B cell (primary cell): ENCODE measurements at regions of chr6 and their contacts with region 1.

Region 1: GRCh38 chr6:157274471-157275226 is 48.7 kb downstream of the TMEM242 start:
- DNase-seq: peak; percentile 95
- ATAC-seq: peak; percentile 81
- H3K4me3 ChIP-seq: peak overlapping the region in 4 of 5 experiments; percentile 63 to 79 (median 66)
- H3K4me3 Mint-ChIP-seq: peak overlapping the region; percentile 96
- H3K27ac ChIP-seq: peak overlapping the region; percentile 81 to 92
- H3K27ac Mint-ChIP-seq: peak overlapping the region; percentile 98
- H3K4me1 ChIP-seq: peaks cover 9 to 17% of the 10 kb centered on the region in 2 donors
- H3K4me1 Mint-ChIP-seq: peaks cover 14% of the 10 kb centered on the region
- H3K27me3 ChIP-seq: no peaks in the 10 kb centered on the region
- H3K27me3 Mint-ChIP-seq: no peaks in the 10 kb centered on the region
- CTCF ChIP-seq: peak; percentile 89

Region 2: GRCh38 chr6:155314092-155314772 is 1960.4 kb before region 1 on chr6 and contains the start of gene TFB1M:
- CTCF ChIA-PET with region 1: no interaction called
- POLR2A ChIA-PET with region 1: no interaction called
- intact Hi-C with region 1: loop called (anchors 5 kb)
- DNase-seq: peak; percentile 98
- ATAC-seq: peak; percentile 93
- H3K4me3 ChIP-seq: peak within 1 kb of the TSS; percentile 68 to 92 (median 92)
- H3K4me3 Mint-ChIP-seq: peak within 1 kb of the TSS; percentile 100
- H3K27ac ChIP-seq: peak within 1 kb of the TSS; percentile 79 to 84
- H3K27ac Mint-ChIP-seq: peak within 1 kb of the TSS; percentile 97
- H3K4me1 ChIP-seq: peaks cover 4% of the 10 kb centered on the region in 2 donors
- H3K4me1 Mint-ChIP-seq: peaks cover 37% of the 10 kb centered on the region
- H3K27me3 ChIP-seq: no peaks in the 10 kb centered on the region
- H3K27me3 Mint-ChIP-seq: no peaks in the 10 kb centered on the region
- CTCF ChIP-seq: no peak
- total RNA-seq, gene TFB1M: 49.9 and 58.0 TPM in 2 replicates

Region 3: DNA sequence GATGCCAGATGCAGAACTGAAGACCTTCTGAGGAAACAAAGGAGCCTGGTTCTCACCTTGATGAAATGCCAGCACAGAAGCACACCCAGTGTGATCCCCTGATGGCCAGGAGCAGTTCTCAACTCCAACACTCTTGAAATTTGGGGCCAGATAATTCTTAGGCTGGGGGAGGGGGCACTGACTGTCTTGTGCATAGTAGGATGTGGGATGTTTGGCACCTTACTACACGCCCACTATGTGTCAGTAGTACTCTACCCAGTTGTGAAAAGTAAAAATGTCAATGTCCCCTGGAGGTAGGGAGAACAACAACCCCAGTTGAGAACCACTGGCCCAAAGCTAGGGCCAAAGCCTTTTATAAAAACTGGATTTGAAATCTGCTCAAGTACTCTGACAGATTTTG is 895.8 kb before region 1 on chr6:
- CTCF ChIA-PET with region 1: no interaction called
- POLR2A ChIA-PET with region 1: no interaction called
- intact Hi-C with region 1: loop called (anchors 5 kb)
- DNase-seq: peak; percentile 34
- ATAC-seq: peak; percentile 43
- H3K4me3 ChIP-seq: no peak overlapping the region
- H3K4me3 Mint-ChIP-seq: no peak overlapping the region
- H3K27ac ChIP-seq: no peak overlapping the region
- H3K27ac Mint-ChIP-seq: no peak overlapping the region
- H3K4me1 ChIP-seq: no peaks in the 10 kb centered on the region
- H3K4me1 Mint-ChIP-seq: peaks cover 13% of the 10 kb centered on the region
- H3K27me3 ChIP-seq: no peaks in the 10 kb centered on the region
- H3K27me3 Mint-ChIP-seq: no peaks in the 10 kb centered on the region
- CTCF ChIP-seq: peak; percentile 19

Region 4: DNA sequence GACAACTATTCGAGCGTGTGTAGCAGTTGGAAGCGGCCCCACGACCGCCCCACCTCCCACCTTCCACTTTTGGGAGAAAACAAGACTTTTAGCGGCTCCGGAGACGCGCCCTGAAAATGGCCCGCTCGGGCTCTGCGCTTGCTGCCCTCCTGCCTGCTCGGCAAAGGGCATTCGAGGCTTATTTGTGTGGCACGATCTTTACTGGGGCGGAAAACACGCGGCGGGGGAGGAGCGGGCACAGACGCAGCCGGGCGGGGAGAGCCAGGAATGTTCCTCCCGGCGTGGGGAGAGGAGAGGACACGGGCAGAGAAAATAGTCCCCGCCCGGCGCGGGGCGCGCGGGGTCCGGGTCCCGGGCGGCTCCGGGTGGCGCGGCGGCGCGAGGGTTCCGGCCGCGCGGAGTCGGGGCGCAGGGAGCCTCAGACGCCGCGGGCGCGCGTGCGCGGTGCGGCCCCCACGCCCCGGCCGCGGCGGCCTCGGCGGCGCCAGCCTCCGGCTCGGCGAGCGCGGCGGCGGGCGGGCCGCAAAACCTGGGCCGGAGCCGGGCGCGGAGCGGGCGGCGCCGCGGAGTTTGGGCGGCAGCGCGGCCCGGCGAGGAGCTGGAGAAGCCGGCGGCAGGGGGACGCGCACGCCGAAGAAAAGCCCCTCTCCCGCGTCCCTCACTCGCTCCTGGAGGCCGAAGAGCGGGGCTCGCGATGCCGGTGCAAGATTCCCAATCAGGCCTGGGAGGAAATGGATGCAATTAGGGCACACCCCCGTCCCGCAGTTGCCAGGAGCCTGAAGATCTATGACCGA is 587.5 kb before region 1 on chr6:
- CTCF ChIA-PET with region 1: no interaction called
- POLR2A ChIA-PET with region 1: no interaction called
- intact Hi-C with region 1: loop called (anchors 2 kb)
- DNase-seq: peak; percentile 91
- ATAC-seq: peak; percentile 83
- H3K4me3 ChIP-seq: peak overlapping the region; percentile 80 to 99 (median 84)
- H3K4me3 Mint-ChIP-seq: peak overlapping the region; percentile 88
- H3K27ac ChIP-seq: peak overlapping the region; percentile 92 to 94
- H3K27ac Mint-ChIP-seq: peak overlapping the region; percentile 98
- H3K4me1 ChIP-seq: peaks cover 50% of the 10 kb centered on the region in 2 donors
- H3K4me1 Mint-ChIP-seq: peaks cover 59% of the 10 kb centered on the region
- H3K27me3 ChIP-seq: no peaks in the 10 kb centered on the region
- H3K27me3 Mint-ChIP-seq: no peaks in the 10 kb centered on the region
- CTCF ChIP-seq: no peak

Region 5: DNA sequence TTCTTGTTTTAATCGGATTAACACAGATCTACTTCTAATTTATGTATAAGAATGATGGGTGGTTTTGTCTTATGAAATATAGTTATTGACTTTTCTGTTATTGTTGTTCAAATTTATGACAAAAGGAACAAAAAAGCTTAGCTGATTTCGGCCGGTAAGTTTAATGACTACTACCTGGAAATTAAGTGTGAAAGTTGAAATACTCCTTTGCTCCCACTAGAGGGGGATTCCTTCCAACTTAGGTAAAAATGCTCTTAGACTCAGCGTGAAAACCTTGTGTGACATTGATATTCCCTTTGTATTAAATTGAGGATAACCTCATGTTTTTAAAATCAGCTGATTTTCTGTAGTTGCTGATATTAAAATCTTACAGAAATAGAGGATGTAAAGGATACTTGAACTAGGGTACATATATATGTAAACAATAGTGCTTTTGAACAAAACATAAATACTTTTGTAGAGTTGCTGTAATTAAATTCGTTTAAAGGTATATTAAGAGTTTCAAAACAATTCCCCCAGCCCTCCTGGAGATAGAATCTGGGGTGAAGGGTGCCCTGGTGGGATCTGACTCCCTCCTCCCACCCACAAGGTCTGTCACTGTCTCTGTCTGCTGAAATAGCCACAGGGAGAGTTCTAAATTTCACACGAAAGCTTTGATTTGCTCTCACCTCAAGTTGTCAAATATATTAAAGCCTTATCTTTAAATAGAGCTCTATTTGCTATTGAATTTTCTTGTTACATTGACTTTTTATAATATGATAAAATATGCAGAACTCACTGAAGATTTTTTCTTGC is 240.0 kb before region 1 on chr6:
- CTCF ChIA-PET with region 1: interaction called, 10 read pairs
- POLR2A ChIA-PET with region 1: no interaction called
- intact Hi-C with region 1: loop called (anchors 2 kb)
- DNase-seq: peak; percentile 64
- ATAC-seq: peak; percentile 60
- H3K4me3 ChIP-seq: no peak overlapping the region
- H3K4me3 Mint-ChIP-seq: peak overlapping the region; percentile 55
- H3K27ac ChIP-seq: peak overlapping the region in 1 of 2 donors; percentile 80
- H3K27ac Mint-ChIP-seq: peak overlapping the region; percentile 2
- H3K4me1 ChIP-seq: peaks cover 13 to 25% of the 10 kb centered on the region in 2 donors
- H3K4me1 Mint-ChIP-seq: peaks cover 33% of the 10 kb centered on the region
- H3K27me3 ChIP-seq: no peaks in the 10 kb centered on the region
- H3K27me3 Mint-ChIP-seq: no peaks in the 10 kb centered on the region
- CTCF ChIP-seq: peak; percentile 85

Region 6: GRCh38 chr6:157223021-157223430 is 51.6 kb before region 1 on chr6:
- CTCF ChIA-PET with region 1: interaction called, 5 read pairs
- POLR2A ChIA-PET with region 1: interaction called, 3 read pairs
- intact Hi-C with region 1: loop called (anchors 1 kb)
- DNase-seq: peak; percentile 69
- ATAC-seq: peak; percentile 53
- H3K4me3 ChIP-seq: peak overlapping the region in 4 of 5 experiments; percentile 23 to 40 (median 32)
- H3K4me3 Mint-ChIP-seq: peak overlapping the region; percentile 89
- H3K27ac ChIP-seq: peak overlapping the region; percentile 44 to 68
- H3K27ac Mint-ChIP-seq: peak overlapping the region; percentile 84
- H3K4me1 ChIP-seq: peaks cover 46 to 49% of the 10 kb centered on the region in 2 donors
- H3K4me1 Mint-ChIP-seq: peaks cover 42% of the 10 kb centered on the region
- H3K27me3 ChIP-seq: peaks cover 0 to 16% (median under 1%) of the 10 kb centered on the region in 4 experiments
- H3K27me3 Mint-ChIP-seq: no peaks in the 10 kb centered on the region
- CTCF ChIP-seq: no peak

Region 7: GRCh38 chr6:157253017-157253416 is 21.6 kb before region 1 on chr6:
- CTCF ChIA-PET with region 1: no interaction called
- POLR2A ChIA-PET with region 1: no interaction called
- intact Hi-C with region 1: no loop called
- DNase-seq: no peak
- ATAC-seq: no peak
- H3K4me3 ChIP-seq: no peak overlapping the region
- H3K4me3 Mint-ChIP-seq: no peak overlapping the region
- H3K27ac ChIP-seq: no peak overlapping the region
- H3K27ac Mint-ChIP-seq: no peak overlapping the region
- H3K4me1 ChIP-seq: no peaks in the 10 kb centered on the region
- H3K4me1 Mint-ChIP-seq: no peaks in the 10 kb centered on the region
- H3K27me3 ChIP-seq: peaks cover 0 to 2% (median 0%) of the 10 kb centered on the region in 4 experiments
- H3K27me3 Mint-ChIP-seq: peaks cover 33% of the 10 kb centered on the region
- CTCF ChIP-seq: no peak

Region 8: DNA sequence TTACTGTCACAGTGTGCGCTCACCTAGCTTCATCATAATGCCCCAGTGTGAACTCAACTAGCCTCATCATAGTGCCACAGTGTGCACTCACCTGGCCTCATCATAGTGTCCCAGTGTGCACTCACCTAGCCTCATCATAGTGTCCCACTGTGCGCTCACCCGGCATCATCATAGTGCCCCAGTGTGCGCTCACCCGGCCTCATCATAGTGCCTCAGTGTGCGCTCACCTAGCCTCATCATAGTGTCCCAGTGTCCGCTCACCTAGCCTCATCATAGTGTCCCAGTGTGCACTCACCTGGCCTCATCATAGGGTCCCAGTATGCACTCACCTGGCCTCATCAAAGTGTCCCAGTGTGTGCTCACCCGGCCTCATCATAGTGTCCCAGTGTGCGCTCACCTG is 38.1 kb after region 1 on chr6:
- CTCF ChIA-PET with region 1: no interaction called
- POLR2A ChIA-PET with region 1: no interaction called
- intact Hi-C with region 1: no loop called
- DNase-seq: peak; percentile 31
- ATAC-seq: no peak
- H3K4me3 ChIP-seq: no peak overlapping the region
- H3K4me3 Mint-ChIP-seq: no peak overlapping the region
- H3K27ac ChIP-seq: no peak overlapping the region
- H3K27ac Mint-ChIP-seq: no peak overlapping the region
- H3K4me1 ChIP-seq: peaks cover 0 to 3% of the 10 kb centered on the region in 2 donors
- H3K4me1 Mint-ChIP-seq: peaks cover 3% of the 10 kb centered on the region
- H3K27me3 ChIP-seq: no peaks in the 10 kb centered on the region
- H3K27me3 Mint-ChIP-seq: no peaks in the 10 kb centered on the region
- CTCF ChIP-seq: no peak

Region 9: GRCh38 chr6:157323255-157323965 is 48.8 kb after region 1 on chr6 and contains the start of gene TMEM242:
- CTCF ChIA-PET with region 1: no interaction called
- POLR2A ChIA-PET with region 1: no interaction called
- intact Hi-C with region 1: loop called (anchors 1 kb)
- DNase-seq: peak; percentile 93
- ATAC-seq: peak; percentile 92
- H3K4me3 ChIP-seq: peak within 1 kb of the TSS; percentile 61 to 93 (median 82)
- H3K4me3 Mint-ChIP-seq: peak within 1 kb of the TSS; percentile 97
- H3K27ac ChIP-seq: peak within 1 kb of the TSS; percentile 36 to 76
- H3K27ac Mint-ChIP-seq: peak within 1 kb of the TSS; percentile 92
- H3K4me1 ChIP-seq: peaks cover 10 to 11% of the 10 kb centered on the region in 2 donors
- H3K4me1 Mint-ChIP-seq: peaks cover 14% of the 10 kb centered on the region
- H3K27me3 ChIP-seq: peaks cover 0 to 13% (median 5%) of the 10 kb centered on the region in 4 experiments
- H3K27me3 Mint-ChIP-seq: peaks cover 29% of the 10 kb centered on the region
- CTCF ChIP-seq: peak; percentile 42
- total RNA-seq, gene TMEM242: 24.1 and 25.0 TPM in 2 replicates